Activated CD4-positive, alpha-beta memory T cell treated with anti-CD3 and anti-CD28 coated beads, Interleukin-2, amount 10 ng/mL, durations not matched to agents 7 days and 5 days (primary cell): ENCODE measurements at regions of chr1 and their contacts with region 1.

Region 1: DNA sequence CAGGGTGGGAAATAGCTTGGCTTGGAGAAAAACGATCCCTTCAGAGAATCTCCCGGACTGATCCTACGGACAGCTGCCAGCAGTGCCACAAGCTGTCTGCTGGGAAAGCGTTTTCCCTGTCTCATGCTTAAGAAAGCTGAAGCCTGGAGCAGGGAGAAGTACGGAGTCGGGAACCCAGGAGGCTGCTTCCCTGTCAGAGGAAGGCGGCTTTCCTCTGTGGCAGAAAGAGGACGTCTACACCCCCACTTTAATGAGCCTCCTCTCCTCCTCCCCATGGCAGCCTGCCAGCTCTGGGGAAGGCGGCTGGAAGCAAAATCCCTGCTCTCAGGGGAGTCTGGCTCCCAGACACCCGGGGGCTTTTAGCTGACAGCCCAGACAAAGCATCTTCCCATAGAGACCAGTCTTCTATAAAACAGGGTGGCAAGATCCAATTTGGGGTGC is 7.3 kb downstream of the KIF21B start:
- DNase-seq: no peak
- H3K4me3 Mint-ChIP-seq: peak overlapping the region; percentile 69
- H3K27ac Mint-ChIP-seq: peak overlapping the region; percentile 99
- H3K4me1 Mint-ChIP-seq: peaks cover 95% of the 10 kb centered on the region
- H3K27me3 Mint-ChIP-seq: no peaks in the 10 kb centered on the region

Region 2: DNA sequence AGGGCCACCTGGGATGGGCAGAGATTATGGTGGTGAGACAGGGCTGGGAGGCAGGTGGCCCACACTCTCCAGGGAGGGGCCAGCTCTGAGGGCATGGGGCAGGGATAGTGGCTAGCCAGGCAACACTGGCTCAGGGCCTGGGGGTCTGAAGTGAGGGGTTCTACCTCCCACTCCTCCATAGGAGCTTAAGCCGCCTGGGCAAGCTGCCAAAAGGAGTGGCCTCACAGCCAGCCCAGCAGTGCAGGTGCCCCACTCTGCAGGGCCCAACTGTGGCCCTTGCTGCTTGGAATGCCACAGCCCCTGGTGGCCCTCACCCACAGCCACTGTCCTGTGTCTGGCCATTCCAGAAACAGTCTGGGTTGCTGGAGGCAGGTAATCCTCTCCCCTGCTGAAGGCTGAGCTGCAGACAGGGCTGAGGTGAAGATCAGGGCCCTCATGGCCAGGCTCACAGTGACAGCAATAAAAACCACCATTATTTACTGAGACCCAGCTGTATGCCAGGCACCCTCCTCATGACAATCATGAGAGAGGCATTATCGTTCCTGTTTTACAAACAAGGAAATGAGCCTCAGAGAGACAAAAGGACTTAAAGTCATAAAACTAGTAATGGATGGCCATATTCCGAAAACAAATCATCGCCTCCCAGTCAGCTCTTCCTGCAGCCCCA is 23.7 kb before region 1 on chr1:
- CTCF ChIA-PET with region 1: interaction called, 5 read pairs
- POLR2A ChIA-PET with region 1: interaction called, 19 read pairs
- DNase-seq: no peak
- H3K4me3 Mint-ChIP-seq: no peak overlapping the region
- H3K27ac Mint-ChIP-seq: no peak overlapping the region
- H3K4me1 Mint-ChIP-seq: no peaks in the 10 kb centered on the region
- H3K27me3 Mint-ChIP-seq: no peaks in the 10 kb centered on the region